BJ (cell line): ENCODE measurements at regions of chr19 and their contacts with region 1.

Region 1: GRCh38 chr19:45485305-45486077 is 11.4 kb downstream of the RTN2 start:
- DNase-seq: no peak
- H3K4me3 ChIP-seq: peak overlapping the region; percentile 65
- H3K27me3 ChIP-seq: no peaks in the 10 kb centered on the region
- CTCF ChIP-seq: peak; percentile 91

Region 2: DNA sequence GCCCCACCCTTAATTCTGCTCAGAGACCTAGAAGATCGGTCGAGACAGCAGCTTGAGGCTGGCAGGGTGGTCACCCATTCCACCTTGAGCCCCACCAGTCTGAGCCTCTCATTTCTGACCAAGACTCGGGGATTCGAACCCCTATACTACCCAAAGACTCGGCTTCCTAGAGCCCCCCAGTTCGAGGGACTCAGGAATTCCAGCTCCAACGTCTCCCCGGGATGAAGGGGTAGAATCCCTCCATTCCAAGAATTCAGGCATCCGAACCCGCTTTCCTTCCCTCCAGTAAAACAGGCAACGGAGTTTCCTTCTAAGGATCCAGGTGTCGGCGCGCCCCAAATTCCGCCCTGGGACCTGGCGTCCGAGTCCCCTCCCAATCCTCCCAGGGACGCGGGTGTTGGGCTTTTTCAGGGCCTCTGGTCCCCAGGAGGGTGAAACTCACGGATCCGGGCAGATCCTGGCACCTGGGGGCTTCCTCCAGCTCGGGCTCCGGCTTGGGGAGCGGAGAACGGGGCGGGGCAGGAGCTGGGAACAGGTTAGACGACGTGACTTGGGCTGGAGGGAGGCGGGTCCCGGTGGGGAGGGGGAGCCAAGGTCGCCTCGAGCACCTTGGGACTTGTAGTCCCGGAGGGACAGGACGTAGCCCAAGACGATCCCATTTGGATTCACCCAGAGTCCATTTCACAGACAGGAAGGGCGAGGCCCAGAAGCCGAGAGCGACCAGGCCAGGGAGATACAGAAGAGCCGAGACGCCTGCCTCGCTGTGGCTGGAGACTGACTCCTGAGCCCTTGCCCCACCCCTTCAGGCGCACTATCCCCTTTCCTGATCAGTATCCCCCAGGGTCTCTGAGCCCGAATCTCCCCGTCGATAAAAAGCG is 80.7 kb before region 1 on chr19 and contains the start of gene PPP1R13L:
- CTCF ChIA-PET with region 1: interaction called, 25 read pairs
- POLR2A ChIA-PET with region 1: no interaction called
- DNase-seq: no peak
- H3K4me3 ChIP-seq: peak within 1 kb of the TSS; percentile 92
- H3K27me3 ChIP-seq: no peaks in the 10 kb centered on the region
- CTCF ChIP-seq: no peak
- polyA plus RNA-seq, gene PPP1R13L: 5.4 and 12.3 TPM in 2 replicates

Region 3: DNA sequence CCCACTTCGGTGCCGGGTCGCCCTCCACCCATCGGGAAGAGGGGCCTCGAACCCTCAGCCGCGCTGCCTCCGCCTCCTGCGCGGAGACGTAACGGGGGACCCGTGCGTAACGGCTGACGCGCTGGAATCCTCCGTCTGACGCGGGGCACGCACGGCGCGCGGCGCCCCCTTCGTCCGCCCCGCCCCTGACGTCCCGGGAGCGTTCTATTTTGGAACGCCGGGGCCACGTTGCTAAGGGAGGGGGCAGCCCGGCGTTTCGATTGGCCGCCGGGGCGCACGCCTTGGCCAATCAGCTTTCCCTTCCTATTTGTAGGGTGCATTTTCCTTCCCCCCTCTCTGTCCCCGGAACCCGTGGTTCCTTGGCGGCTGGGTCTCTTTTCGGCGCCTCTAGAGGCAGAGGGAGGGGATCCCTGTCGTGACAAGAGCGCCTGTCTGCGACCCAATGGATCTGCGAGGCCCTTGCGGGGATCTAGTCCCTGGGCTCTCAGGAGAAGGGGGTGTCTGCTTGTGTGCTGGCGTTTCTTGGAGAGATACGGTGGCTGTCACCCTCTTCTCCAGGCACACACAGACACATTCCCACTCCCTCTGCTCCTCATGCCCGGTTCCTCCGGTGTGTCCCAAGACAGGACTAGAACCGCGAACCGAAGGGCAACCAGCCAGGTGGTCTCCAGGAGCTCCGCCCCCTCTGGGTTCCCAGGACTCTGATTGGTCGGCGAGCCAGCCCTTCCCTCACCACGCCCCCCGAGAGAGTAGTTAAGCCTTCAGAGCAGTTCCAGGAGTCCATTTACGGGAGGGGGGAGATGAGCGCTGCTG is 16.2 kb before region 1 on chr19:
- CTCF ChIA-PET with region 1: interaction called, 50 read pairs
- POLR2A ChIA-PET with region 1: interaction called, 3 read pairs
- DNase-seq: no peak
- H3K4me3 ChIP-seq: peak overlapping the region; percentile 77
- H3K27me3 ChIP-seq: no peaks in the 10 kb centered on the region
- CTCF ChIP-seq: 0 out of 2 replicates have a peak, but pooled peaks have one; percentile 8

Region 4: DNA sequence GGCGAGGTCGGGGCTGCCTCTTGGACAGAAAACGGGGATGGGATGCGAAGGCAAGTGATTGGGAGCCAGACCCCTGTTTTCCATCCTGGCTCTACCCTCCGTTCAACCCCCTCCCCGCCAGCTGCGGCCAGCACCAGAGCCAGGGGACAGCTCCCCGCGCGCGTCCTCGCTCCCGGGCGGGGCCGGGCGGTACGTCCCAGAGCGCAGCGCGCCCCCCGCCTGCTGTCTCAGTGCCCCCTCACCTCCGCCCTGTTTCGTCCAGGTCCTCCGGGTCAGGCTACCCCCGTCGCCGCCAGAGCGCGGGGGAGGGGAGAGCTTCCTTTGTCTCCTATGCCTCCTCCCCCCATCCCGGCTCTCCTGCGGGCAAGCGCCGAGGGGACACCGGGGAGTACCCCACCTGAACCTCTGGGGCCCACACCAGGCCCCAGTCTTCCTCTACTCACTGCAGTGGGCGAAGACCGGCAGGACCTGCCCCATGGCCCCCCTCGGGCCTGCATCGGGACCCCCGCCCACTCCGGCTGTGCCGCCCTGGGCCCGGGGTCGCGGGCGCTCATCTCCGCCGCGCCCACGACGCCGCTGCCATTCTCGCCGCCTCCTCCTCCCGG is 11.0 kb after region 1 on chr19:
- CTCF ChIA-PET with region 1: interaction called, 56 read pairs
- POLR2A ChIA-PET with region 1: no interaction called
- DNase-seq: no peak
- H3K4me3 ChIP-seq: peak overlapping the region; percentile 70
- H3K27me3 ChIP-seq: no peaks in the 10 kb centered on the region
- CTCF ChIP-seq: no peak

Region 5: GRCh38 chr19:45506246-45506990 is 20.9 kb after region 1 on chr19:
- CTCF ChIA-PET with region 1: interaction called, 13 read pairs
- POLR2A ChIA-PET with region 1: no interaction called
- DNase-seq: no peak
- H3K4me3 ChIP-seq: peak overlapping the region; percentile 59
- H3K27me3 ChIP-seq: no peaks in the 10 kb centered on the region
- CTCF ChIP-seq: peak; percentile 72

Region 6: GRCh38 chr19:45591004-45591637 is 105.6 kb after region 1 on chr19:
- CTCF ChIA-PET with region 1: no interaction called
- POLR2A ChIA-PET with region 1: no interaction called
- DNase-seq: no peak
- H3K4me3 ChIP-seq: no peak overlapping the region
- H3K27me3 ChIP-seq: no peaks in the 10 kb centered on the region; the same call in 1 of the 2 replicates
- CTCF ChIP-seq: peak; percentile 62